ENCODE measurements at regions of chr15 and their contacts with region 1.

Region 1: GRCh38 chr15:56496635-56497034 is 31.7 kb upstream of the MNS1 start:
- DNase-seq: peak; percentile 14
- H3K4me3 ChIP-seq: no peak overlapping the region
- CTCF ChIP-seq: peak; percentile 49

Region 2: DNA sequence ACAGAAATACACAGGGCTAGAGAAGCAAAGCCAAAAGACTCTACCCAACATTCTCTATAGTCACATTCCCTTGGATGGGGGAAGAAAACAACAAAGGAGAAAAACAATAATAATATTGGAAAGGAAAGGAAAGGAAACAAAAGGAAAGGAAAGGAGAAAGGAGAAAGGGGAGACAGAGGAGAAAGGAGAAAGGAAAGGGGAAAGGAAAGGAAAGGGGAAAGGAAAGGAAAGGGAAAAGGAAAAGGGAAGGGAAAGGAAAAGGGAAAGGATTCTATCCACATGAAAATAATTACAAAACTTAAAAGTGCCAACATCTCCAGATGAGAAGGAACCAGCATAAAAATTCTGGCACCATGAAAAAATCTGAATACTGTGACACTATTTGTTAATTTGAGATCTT is 22.4 kb after region 1 on chr15:
- CTCF ChIA-PET with region 1: interaction called, 11 read pairs
- POLR2A ChIA-PET with region 1: no interaction called
- DNase-seq: no peak
- H3K4me3 ChIP-seq: no peak overlapping the region
- CTCF ChIP-seq: no peak

Region 3: GRCh38 chr15:56869573-56869972 is 372.9 kb after region 1 on chr15:
- CTCF ChIA-PET with region 1: interaction called, 12 read pairs
- POLR2A ChIA-PET with region 1: no interaction called
- DNase-seq: no peak
- H3K4me3 ChIP-seq: no peak overlapping the region
- CTCF ChIP-seq: peak; percentile 26